Calu3 (cell line): ENCODE measurements at regions of chr5 and their contacts with region 1.

Region 1: GRCh38 chr5:173010547-173011464 is 27.2 kb downstream of the ATP6V0E1 start:
- DNase-seq: peak; percentile 29
- H3K4me3 Mint-ChIP-seq: no peak overlapping the region
- H3K27ac Mint-ChIP-seq: peak overlapping the region; percentile 48
- H3K4me1 Mint-ChIP-seq: peaks cover 19% of the 10 kb centered on the region
- H3K27me3 Mint-ChIP-seq: no peaks in the 10 kb centered on the region
- CTCF ChIP-seq: no peak

Region 2: GRCh38 chr5:173029499-173029921 is 18.7 kb after region 1 on chr5:
- CTCF ChIA-PET with region 1: interaction called, 10 read pairs
- intact Hi-C with region 1: no loop called
- DNase-seq: no peak
- H3K4me3 Mint-ChIP-seq: no peak overlapping the region
- H3K27ac Mint-ChIP-seq: no peak overlapping the region
- H3K4me1 Mint-ChIP-seq: peaks cover 4% of the 10 kb centered on the region
- H3K27me3 Mint-ChIP-seq: no peaks in the 10 kb centered on the region
- CTCF ChIP-seq: no peak